ENCODE measurements at regions of chr3 and their contacts with region 1.

Region 1: GRCh38 chr3:27357665-27358258 is 11.4 kb downstream of the NEK10 start:
- DNase-seq: peak in 3 of 5 donors; percentile 25 to 29 (median 27)
- ATAC-seq: peak in 3 of 4 donors; percentile 63 to 66 (median 66)
- H3K4me3 ChIP-seq: no peak overlapping the region
- H3K27ac ChIP-seq: no peak overlapping the region
- H3K4me1 ChIP-seq: peaks cover 0 to 30% (median 0%) of the 10 kb centered on the region in 12 donors
- H3K27me3 ChIP-seq: no peaks in the 10 kb centered on the region
- CTCF ChIP-seq: peak in 11 of 12 donors; percentile 26 to 66 (median 52)
- POLR2A ChIP-seq: no peak

Region 2: DNA sequence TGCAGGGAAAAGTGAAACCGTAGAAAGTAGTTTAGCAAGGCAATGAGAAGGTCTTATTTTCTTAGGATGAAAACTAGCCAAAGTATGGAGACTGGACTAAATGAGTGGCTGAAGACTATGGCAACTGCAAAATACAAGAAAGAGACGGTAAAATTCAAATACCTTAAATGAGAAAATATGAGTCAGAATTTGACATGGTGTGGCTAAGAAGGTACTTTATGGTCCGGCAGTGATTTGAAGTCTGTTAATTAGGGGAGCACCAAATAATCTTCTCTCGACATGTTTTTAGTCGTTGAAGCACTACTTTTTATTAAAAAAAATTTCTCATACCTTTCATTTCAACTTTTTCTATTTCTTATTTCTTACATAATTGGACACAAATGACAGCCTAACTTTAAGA is 870.9 kb after region 1 on chr3:
- intact Hi-C with region 1: loop called in 1 of 10 experiments (anchors 5 kb)
- DNase-seq: no peak
- ATAC-seq: no peak
- H3K4me3 ChIP-seq: no peak overlapping the region
- H3K27ac ChIP-seq: no peak overlapping the region
- H3K4me1 ChIP-seq: no peaks in the 10 kb centered on the region
- H3K27me3 ChIP-seq: no peaks in the 10 kb centered on the region
- CTCF ChIP-seq: no peak
- POLR2A ChIP-seq: no peak

Region 3: GRCh38 chr3:28268989-28269388 is 911.2 kb after region 1 on chr3:
- intact Hi-C with region 1: no loop called
- DNase-seq: no peak
- ATAC-seq: no peak
- H3K4me3 ChIP-seq: no peak overlapping the region
- H3K27ac ChIP-seq: no peak overlapping the region
- H3K4me1 ChIP-seq: peaks cover 0 to 7% (median 0%) of the 10 kb centered on the region in 12 donors
- H3K27me3 ChIP-seq: no peaks in the 10 kb centered on the region
- CTCF ChIP-seq: no peak
- POLR2A ChIP-seq: no peak

Measured in heart left ventricle (tissue), 16 donors.